Mammary epithelial cell (primary cell): ENCODE measurements at regions of chr14 and their contacts with region 1.

Region 1: GRCh38 chr14:86799244-86799647 is 1193.7 kb downstream of the GALC start:
- DNase-seq: peak; percentile 97
- H3K4me3 ChIP-seq: no peak overlapping the region
- H3K27ac ChIP-seq: peak overlapping the region; percentile 79
- H3K4me1 ChIP-seq: peaks cover 16% of the 10 kb centered on the region
- H3K27me3 ChIP-seq: no peaks in the 10 kb centered on the region
- CTCF ChIP-seq: peak; percentile 9 to 39

Region 2: GRCh38 chr14:86654558-86655184 is 144.6 kb before region 1 on chr14:
- CTCF ChIA-PET with region 1: no interaction called
- dilution Hi-C with region 1: no loop called
- in situ Hi-C with region 1: no loop called
- intact Hi-C with region 1: loop called (anchors 10 kb)
- DNase-seq: peak; percentile 22
- H3K4me3 ChIP-seq: no peak overlapping the region
- H3K27ac ChIP-seq: no peak overlapping the region
- H3K4me1 ChIP-seq: no peaks in the 10 kb centered on the region
- H3K27me3 ChIP-seq: no peaks in the 10 kb centered on the region
- CTCF ChIP-seq: peak; percentile 62 to 63